ENCODE measurements at regions of chr5 and their contacts with region 1.

Region 1: GRCh38 chr5:88140856-88141752 is 127.5 kb downstream of the TMEM161B start:
- ATAC-seq: peak; percentile 91 to 95 (median 92)
- H3K4me3 ChIP-seq: peak overlapping the region; percentile 36 to 49 (median 45)
- H3K27ac ChIP-seq: peak overlapping the region; percentile 51 to 65
- H3K4me1 ChIP-seq: peaks cover 5 to 17% of the 10 kb centered on the region in 2 donors

Region 2: GRCh38 chr5:87432460-87432859 is 708.6 kb before region 1 on chr5:
- in situ Hi-C with region 1: loop called in 1 of 9 experiments (anchors 25 kb)
- ATAC-seq: no peak
- H3K4me3 ChIP-seq: no peak overlapping the region
- H3K27ac ChIP-seq: no peak overlapping the region
- H3K4me1 ChIP-seq: no peaks in the 10 kb centered on the region

Region 3: GRCh38 chr5:87780831-87781760 is 360.0 kb before region 1 on chr5:
- in situ Hi-C with region 1: loop called in 1 of 9 experiments (anchors 25 kb)
- ATAC-seq: peak; percentile 100
- H3K4me3 ChIP-seq: peak overlapping the region in 1 of 5 donors; percentile 20
- H3K27ac ChIP-seq: no peak overlapping the region
- H3K4me1 ChIP-seq: no peaks in the 10 kb centered on the region

Region 4: DNA sequence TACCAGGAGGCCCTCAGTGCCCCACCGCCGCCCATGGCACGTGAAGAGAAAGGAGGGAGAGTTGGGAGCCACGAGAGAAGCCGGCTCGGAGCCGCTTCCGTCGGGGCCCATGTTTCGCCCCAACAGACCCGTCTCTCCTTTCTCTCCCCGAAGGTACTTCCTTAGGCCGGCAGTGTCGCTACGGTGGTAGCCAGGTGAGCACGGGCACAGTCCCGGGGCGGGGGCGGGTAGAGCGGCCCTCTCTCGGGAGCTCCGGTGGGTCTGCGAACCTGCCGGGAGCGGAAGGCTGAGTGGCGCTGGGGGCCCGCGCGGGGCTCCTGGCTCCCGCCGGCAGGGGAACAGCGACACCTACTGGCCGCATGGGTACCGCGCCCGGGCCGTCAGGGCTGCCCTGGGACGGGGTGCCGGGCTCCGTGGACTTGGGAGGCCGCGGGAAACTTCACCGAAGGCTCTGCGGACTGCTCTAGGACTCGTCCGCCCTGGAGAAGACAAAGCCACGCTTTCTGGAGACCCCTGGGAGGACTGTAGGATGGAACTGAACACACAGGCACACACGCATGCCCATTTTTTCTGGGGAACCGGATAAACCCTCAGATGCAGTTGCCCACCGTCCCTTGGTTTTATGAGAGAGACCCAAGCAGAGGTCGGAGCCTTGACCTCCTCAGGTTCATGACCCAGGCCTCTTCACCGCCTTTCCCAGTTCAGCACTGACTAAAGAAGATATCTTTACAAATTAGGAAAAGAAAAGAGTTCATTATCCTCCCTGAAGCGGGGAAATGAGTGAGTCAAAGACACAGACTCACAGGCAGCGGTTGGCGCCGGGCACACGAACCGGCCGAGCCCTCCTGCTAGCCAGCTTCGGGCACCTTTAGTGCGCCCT is 539.4 kb after region 1 on chr5:
- in situ Hi-C with region 1: loop called in 5 of 9 experiments (anchors 5 to 25 kb)
- ATAC-seq: peak; percentile 59 to 89 (median 68)
- H3K4me3 ChIP-seq: peak overlapping the region; percentile 41 to 97 (median 91)
- H3K27ac ChIP-seq: peak overlapping the region; percentile 8 to 66
- H3K4me1 ChIP-seq: peaks cover 0 to 9% of the 10 kb centered on the region in 2 donors

Region 5: DNA sequence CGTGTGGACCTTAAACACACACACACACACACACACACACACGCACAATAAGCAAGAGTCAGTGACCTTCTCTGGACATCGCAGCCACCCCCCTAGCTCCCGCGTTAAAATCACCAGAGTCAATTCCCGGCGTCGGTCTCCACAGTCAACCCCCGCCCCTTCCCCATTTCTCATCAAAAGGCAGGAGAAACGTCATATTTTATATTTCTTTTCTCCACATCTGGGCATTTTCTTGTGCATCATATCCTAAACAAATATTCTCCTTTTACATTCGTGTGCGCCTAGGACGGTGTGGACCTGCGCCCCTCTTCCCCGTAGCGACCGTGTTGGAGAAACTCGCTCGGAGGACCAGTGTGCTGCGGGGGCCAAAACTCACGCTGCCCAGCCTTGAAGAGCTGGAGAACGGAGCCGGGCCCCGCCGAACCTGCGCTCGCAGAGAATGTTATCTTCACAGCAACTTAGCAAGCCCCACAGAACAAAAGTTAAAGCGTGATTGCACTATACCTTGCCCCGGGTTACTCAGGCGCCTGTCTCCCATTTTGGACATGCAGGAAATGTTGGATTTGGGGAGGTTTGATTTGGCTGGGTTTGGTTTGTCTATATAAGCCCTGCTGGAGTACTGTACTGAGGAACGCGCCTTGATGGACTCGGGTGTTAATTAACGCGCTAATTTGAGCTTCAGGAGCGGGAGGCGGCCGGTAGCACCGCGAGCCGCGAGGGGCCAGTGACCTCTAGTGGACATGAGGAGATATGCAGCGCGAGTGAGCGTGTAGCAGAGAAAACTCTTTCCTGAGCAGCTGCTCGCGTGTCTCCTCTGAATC is 549.5 kb after region 1 on chr5:
- in situ Hi-C with region 1: loop called in 3 of 9 experiments (anchors 5 to 25 kb)
- ATAC-seq: peak; percentile 76 to 90 (median 88)
- H3K4me3 ChIP-seq: peak overlapping the region; percentile 25 to 38 (median 27)
- H3K27ac ChIP-seq: no peak overlapping the region
- H3K4me1 ChIP-seq: peaks cover 6 to 17% of the 10 kb centered on the region in 2 donors